PC-9 (cell line): ENCODE measurements at regions of chr19 and their contacts with region 1.

Region 1: GRCh38 chr19:2507109-2507508 is 31.2 kb downstream of the GADD45B start:
- DNase-seq: peak; percentile 55 to 89
- H3K4me3 ChIP-seq: no peak overlapping the region
- H3K27ac ChIP-seq: peak overlapping the region; percentile 72
- H3K4me1 ChIP-seq: peaks cover 32% of the 10 kb centered on the region
- H3K27me3 ChIP-seq: no peaks in the 10 kb centered on the region
- CTCF ChIP-seq: no peak

Region 2: GRCh38 chr19:2302319-2303210 is 204.5 kb before region 1 on chr19:
- CTCF ChIA-PET with region 1: no interaction called
- POLR2A ChIA-PET with region 1: interaction called, 17 read pairs
- intact Hi-C with region 1: no loop called
- DNase-seq: no peak
- H3K4me3 ChIP-seq: no peak overlapping the region
- H3K27ac ChIP-seq: no peak overlapping the region
- H3K4me1 ChIP-seq: no peaks in the 10 kb centered on the region
- H3K27me3 ChIP-seq: no peaks in the 10 kb centered on the region
- CTCF ChIP-seq: no peak

Region 3: GRCh38 chr19:2494444-2495129 is 12.5 kb before region 1 on chr19:
- CTCF ChIA-PET with region 1: no interaction called
- POLR2A ChIA-PET with region 1: no interaction called
- intact Hi-C with region 1: loop called (anchors 1 kb)
- DNase-seq: peak; percentile 32 to 50
- H3K4me3 ChIP-seq: peak overlapping the region; percentile 62
- H3K27ac ChIP-seq: peak overlapping the region; percentile 75
- H3K4me1 ChIP-seq: peaks cover 37% of the 10 kb centered on the region
- H3K27me3 ChIP-seq: no peaks in the 10 kb centered on the region
- CTCF ChIP-seq: no peak

Region 4: DNA sequence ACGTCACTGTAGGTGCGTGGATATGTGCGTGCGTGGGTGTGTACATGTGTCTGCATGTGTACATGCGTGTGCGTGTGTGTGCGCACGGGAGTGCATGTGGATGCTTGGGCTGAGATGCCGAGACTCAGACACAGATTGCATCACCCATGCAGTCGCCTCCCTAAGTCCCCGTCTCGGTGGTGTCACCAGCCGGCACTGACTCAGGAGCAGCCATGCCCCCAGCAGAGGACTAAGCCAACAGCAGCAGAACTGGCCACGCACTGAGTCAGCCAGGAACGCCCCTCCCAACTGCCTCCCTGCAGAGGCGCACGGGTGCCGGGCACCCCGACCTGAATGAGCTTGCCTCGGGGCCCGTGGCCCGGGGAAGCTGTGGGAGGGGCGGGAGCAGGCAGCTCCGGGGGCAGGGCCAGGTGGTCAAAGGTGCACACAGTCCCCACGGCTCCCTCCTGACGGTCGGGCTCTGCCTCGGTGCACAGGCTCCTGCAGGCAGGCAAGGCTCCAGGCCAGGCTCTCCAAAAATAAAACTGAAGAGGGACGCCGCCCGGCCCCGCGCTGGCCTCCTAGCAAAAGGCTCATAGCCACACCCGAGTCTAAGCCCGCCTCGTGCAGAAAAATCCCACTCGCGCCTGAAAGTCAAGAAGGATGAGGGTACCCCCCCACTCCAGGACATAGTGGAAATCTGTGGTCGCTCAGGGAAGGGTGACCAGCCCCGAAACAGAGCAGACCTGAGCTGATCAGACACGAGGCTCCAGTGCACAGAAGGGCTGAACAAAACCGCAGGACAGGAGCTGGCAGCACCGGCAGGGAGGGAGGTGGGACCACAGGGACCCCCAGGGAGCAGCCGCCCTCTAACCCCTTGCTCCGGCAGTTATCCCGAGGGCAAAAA is 18.0 kb after region 1 on chr19:
- CTCF ChIA-PET with region 1: interaction called, 3 read pairs
- POLR2A ChIA-PET with region 1: interaction called, 4 read pairs
- intact Hi-C with region 1: loop called (anchors 1 kb)
- DNase-seq: peak; percentile 88 to 93
- H3K4me3 ChIP-seq: peak overlapping the region; percentile 50
- H3K27ac ChIP-seq: peak overlapping the region; percentile 88
- H3K4me1 ChIP-seq: peaks cover 41% of the 10 kb centered on the region
- H3K27me3 ChIP-seq: no peaks in the 10 kb centered on the region
- CTCF ChIP-seq: no peak